ENCODE measurements at regions of chr18 and their contacts with region 1.

Region 1: DNA sequence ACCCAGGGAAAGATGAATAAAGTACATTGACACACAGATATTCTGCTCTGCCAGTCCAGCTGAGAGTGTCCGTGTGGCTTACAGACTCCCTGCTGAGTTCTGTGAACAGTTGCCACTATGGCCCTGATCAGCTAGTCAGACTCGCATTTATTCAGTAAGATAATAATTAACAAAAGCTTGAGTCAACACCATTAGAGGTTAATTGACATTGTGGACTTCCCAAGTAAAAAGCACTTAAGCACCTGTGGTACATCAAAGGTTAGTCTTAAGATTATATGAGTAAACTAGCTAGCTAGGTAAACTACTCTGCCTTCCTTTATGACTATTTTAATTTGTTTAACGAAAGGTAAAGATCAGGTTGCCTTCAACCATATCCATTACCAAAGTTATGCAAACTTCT is 33.7 kb downstream of the ANKRD30B start:
- DNase-seq: no peak
- ATAC-seq: no peak
- H3K4me3 ChIP-seq: no peak overlapping the region
- H3K4me3 Mint-ChIP-seq: no peak overlapping the region
- H3K27ac ChIP-seq: no peak overlapping the region
- H3K27ac Mint-ChIP-seq: no peak overlapping the region
- H3K4me1 ChIP-seq: no peaks in the 10 kb centered on the region
- H3K4me1 Mint-ChIP-seq: no peaks in the 10 kb centered on the region
- H3K27me3 ChIP-seq: no peaks in the 10 kb centered on the region
- H3K27me3 Mint-ChIP-seq: no peaks in the 10 kb centered on the region

Region 2: DNA sequence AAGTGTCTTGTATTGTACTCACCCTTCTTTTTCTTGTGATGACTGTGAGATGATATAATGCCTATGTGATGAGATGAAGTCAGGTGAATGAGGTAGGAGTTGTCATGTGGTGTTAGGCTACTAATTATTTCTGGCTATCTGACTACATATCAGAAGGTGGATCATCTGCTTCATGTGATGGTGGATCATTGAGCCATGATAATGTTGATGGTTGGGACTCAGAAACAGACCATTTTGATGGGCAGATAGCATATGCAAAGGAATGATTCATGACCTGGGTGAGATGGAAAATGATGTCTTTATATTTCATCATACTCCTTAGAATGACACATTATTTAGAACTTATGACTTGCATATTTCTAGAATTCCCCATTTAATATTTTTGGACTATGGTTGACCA is 14.2 kb before region 1 on chr18:
- CTCF ChIA-PET with region 1: no interaction called
- POLR2A ChIA-PET with region 1: interaction called in 1 of 2 experiments, 10 read pairs
- DNase-seq: no peak
- ATAC-seq: no peak
- H3K4me3 ChIP-seq: no peak overlapping the region
- H3K4me3 Mint-ChIP-seq: no peak overlapping the region
- H3K27ac ChIP-seq: no peak overlapping the region
- H3K27ac Mint-ChIP-seq: no peak overlapping the region
- H3K4me1 ChIP-seq: no peaks in the 10 kb centered on the region
- H3K4me1 Mint-ChIP-seq: no peaks in the 10 kb centered on the region
- H3K27me3 ChIP-seq: no peaks in the 10 kb centered on the region
- H3K27me3 Mint-ChIP-seq: no peaks in the 10 kb centered on the region

Region 3: GRCh38 chr18:14933049-14933851 is 151.6 kb after region 1 on chr18:
- CTCF ChIA-PET with region 1: no interaction called
- POLR2A ChIA-PET with region 1: no interaction called
- DNase-seq: no peak
- ATAC-seq: no peak
- H3K4me3 ChIP-seq: no peak overlapping the region
- H3K4me3 Mint-ChIP-seq: no peak overlapping the region
- H3K27ac ChIP-seq: no peak overlapping the region
- H3K27ac Mint-ChIP-seq: no peak overlapping the region
- H3K4me1 ChIP-seq: no peaks in the 10 kb centered on the region
- H3K4me1 Mint-ChIP-seq: no peaks in the 10 kb centered on the region
- H3K27me3 ChIP-seq: peaks cover 0 to 9% of the 10 kb centered on the region in 2 experiments
- H3K27me3 Mint-ChIP-seq: no peaks in the 10 kb centered on the region

Measured in T-cell (primary cell).